CD4-positive, alpha-beta memory T cell (primary cell): ENCODE measurements at regions of chr1 and their contacts with region 1.

Region 1: DNA sequence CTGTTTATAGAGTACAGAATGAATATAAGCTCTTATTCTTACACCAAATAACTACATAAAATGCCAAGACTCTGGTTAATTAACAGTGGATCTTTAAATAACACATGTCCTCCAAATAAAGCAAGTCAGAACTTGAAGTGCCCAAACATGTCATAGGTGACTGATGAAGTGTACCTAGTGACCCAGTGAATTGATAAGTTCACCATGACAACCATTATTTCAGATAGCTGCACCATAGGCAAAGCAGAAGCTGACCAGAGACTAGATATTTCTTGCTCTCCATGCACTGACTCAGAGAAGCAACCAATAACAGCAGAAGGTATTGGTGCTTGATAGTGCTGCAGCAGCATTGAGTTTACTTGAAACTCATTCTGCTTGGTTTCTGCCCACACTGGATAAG is 192.1 kb downstream of the DUSP10 start:
- DNase-seq: no peak
- H3K4me3 ChIP-seq: no peak overlapping the region
- H3K4me3 Mint-ChIP-seq: no peak overlapping the region
- H3K27ac ChIP-seq: no peak overlapping the region
- H3K27ac Mint-ChIP-seq: no peak overlapping the region
- H3K4me1 ChIP-seq: no peaks in the 10 kb centered on the region
- H3K4me1 Mint-ChIP-seq: no peaks in the 10 kb centered on the region
- H3K27me3 ChIP-seq: no peaks in the 10 kb centered on the region
- H3K27me3 Mint-ChIP-seq: no peaks in the 10 kb centered on the region

Region 2: DNA sequence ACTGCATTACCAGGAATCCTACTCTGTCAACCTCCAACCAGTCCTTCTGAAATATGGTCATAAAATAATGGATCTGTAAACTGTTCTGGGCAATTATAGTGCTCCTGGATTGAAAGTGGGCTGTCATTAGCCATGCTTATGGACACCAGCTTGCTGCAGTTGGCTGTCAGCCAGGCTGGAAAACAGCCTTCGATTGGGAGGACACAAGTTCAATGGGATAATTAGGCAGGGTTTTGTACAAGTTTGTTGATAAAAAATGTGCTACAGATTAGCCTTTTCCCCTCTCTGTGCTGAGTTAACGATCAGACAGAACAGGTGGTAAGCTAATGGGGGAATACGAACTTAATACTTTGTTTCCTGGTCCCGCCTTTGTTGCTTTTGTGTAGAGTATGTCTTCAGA is 221.9 kb before region 1 on chr1:
- CTCF ChIA-PET with region 1: no interaction called
- POLR2A ChIA-PET with region 1: no interaction called
- intact Hi-C with region 1: no loop called
- DNase-seq: no peak
- H3K4me3 ChIP-seq: no peak overlapping the region
- H3K4me3 Mint-ChIP-seq: no peak overlapping the region
- H3K27ac ChIP-seq: no peak overlapping the region
- H3K27ac Mint-ChIP-seq: no peak overlapping the region
- H3K4me1 ChIP-seq: no peaks in the 10 kb centered on the region
- H3K4me1 Mint-ChIP-seq: no peaks in the 10 kb centered on the region
- H3K27me3 ChIP-seq: no peaks in the 10 kb centered on the region
- H3K27me3 Mint-ChIP-seq: peaks cover 6 to 8% of the 10 kb centered on the region in 2 donors

Region 3: DNA sequence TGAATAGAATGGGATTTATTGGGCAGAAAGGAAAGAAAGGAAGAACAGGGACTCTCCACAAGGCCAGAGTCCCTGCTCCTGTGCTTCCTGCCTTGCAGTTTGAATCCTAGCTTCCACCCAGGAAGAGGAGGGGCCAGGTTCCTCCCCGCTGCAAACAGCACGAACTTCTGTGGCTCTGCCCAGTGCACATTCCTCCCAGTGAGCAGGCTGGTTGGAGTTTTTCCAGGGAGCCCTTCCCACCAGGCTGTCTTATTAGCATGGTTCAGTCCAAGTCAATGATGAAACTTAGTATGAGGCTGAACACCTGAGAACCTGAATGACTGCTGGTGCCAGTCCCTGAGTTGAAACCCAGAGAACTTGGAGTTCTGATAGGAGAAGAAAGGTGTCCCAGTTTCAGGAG is 55.1 kb before region 1 on chr1:
- CTCF ChIA-PET with region 1: no interaction called
- POLR2A ChIA-PET with region 1: no interaction called
- intact Hi-C with region 1: no loop called
- DNase-seq: no peak
- H3K4me3 ChIP-seq: no peak overlapping the region
- H3K4me3 Mint-ChIP-seq: no peak overlapping the region
- H3K27ac ChIP-seq: no peak overlapping the region
- H3K27ac Mint-ChIP-seq: no peak overlapping the region
- H3K4me1 ChIP-seq: no peaks in the 10 kb centered on the region
- H3K4me1 Mint-ChIP-seq: no peaks in the 10 kb centered on the region
- H3K27me3 ChIP-seq: no peaks in the 10 kb centered on the region
- H3K27me3 Mint-ChIP-seq: peaks cover 3% of the 10 kb centered on the region in 2 donors

Region 4: GRCh38 chr1:221858818-221859611 is 309.2 kb after region 1 on chr1:
- CTCF ChIA-PET with region 1: no interaction called
- POLR2A ChIA-PET with region 1: no interaction called
- intact Hi-C with region 1: loop called (anchors 5 kb)
- DNase-seq: no peak
- H3K4me3 ChIP-seq: no peak overlapping the region
- H3K4me3 Mint-ChIP-seq: no peak overlapping the region
- H3K27ac ChIP-seq: no peak overlapping the region
- H3K27ac Mint-ChIP-seq: no peak overlapping the region
- H3K4me1 ChIP-seq: no peaks in the 10 kb centered on the region
- H3K4me1 Mint-ChIP-seq: no peaks in the 10 kb centered on the region
- H3K27me3 ChIP-seq: no peaks in the 10 kb centered on the region
- H3K27me3 Mint-ChIP-seq: no peaks in the 10 kb centered on the region